ENCODE measurements at regions of chr1 and their contacts with region 1.

Region 1: DNA sequence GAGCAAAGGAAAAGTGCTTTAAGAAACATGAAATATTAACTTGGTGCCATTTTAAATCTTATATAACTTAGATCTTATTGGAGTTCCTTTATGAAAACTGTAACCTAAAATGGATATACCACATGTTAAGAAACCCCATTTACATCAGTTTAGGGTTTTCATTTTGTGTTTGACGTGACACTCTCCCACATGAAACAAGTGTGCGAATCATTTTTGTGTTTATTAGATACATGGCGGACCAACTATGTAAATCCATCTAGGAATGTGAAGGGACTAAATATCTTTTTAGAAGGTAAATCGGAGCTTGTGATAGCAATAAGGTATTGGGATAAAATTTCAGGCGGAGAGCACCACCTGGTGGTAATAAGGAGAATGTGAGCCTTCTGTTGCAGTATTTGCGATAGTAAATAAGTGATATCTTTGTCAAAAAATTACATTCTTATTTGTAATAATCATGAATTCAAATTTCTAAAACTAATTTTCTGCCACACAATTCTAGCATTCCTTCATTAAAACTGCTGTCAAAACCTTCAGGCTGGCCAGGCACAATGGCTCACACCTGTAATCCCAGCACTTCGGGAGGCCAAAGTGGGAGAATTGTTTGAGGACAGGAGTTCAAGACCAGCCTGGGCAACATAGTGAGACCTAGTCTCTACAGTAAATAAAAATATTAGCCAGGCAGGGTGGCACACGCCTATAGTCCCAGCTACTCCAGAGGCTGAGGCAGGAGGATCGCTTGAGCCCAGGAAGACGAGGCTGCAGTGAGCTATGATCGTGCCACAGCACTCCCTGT is 31.3 kb downstream of the SMAP2 start:
- DNase-seq: no peak
- H3K4me3 ChIP-seq: peak overlapping the region in 1 of 4 donors; percentile 11
- H3K27ac ChIP-seq: peak overlapping the region in 1 of 4 donors; percentile 28
- H3K4me1 ChIP-seq: peaks cover 0 to 8% (median 0%) of the 10 kb centered on the region in 4 donors
- H3K27me3 ChIP-seq: no peaks in the 10 kb centered on the region
- CTCF ChIP-seq: peak; percentile 63 to 87 (median 76)
- EP300 ChIP-seq: no peak
- POLR2A ChIP-seq: no peak

Region 2: GRCh38 chr1:40143891-40144575 is 260.8 kb before region 1 on chr1:
- intact Hi-C with region 1: loop called (anchors 1 kb)
- DNase-seq: peak; percentile 71
- H3K4me3 ChIP-seq: no peak overlapping the region
- H3K27ac ChIP-seq: no peak overlapping the region
- H3K4me1 ChIP-seq: no peaks in the 10 kb centered on the region
- H3K27me3 ChIP-seq: peaks cover 0 to 13% (median 0%) of the 10 kb centered on the region in 3 donors
- CTCF ChIP-seq: peak; percentile 32 to 73 (median 58)
- EP300 ChIP-seq: no peak
- POLR2A ChIP-seq: no peak

Region 3: GRCh38 chr1:40344597-40344996 is 60.3 kb before region 1 on chr1:
- intact Hi-C with region 1: loop called (anchors 5 kb)
- DNase-seq: peak; percentile 71
- H3K4me3 ChIP-seq: peak overlapping the region in 1 of 4 donors; percentile 9
- H3K27ac ChIP-seq: peak overlapping the region in 1 of 4 donors; percentile 27
- H3K4me1 ChIP-seq: no peaks in the 10 kb centered on the region
- H3K27me3 ChIP-seq: no peaks in the 10 kb centered on the region
- CTCF ChIP-seq: no peak
- EP300 ChIP-seq: no peak
- POLR2A ChIP-seq: no peak

Measured in sigmoid colon (tissue), 7 donors.